ENCODE measurements at regions of chr13 and their contacts with region 1.

Region 1: DNA sequence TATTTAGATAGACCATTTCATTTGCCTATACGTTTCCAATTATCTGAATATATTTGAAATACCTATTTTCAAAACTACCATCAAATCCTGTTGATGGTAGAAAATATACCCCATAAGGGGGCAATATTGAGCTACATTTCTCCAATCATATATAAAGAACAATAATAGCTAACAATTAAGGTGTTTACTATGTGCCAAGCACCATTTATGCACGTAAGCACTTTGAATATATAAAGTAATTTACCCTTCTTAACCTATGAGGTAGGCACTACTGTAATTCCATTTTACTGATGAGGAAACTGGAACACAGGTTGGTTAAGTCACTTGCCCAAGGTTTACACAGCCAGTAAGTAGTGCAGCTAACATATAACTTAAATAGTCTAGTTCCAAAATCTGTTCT is 79.2 kb downstream of the UBL3 start:
- DNase-seq: no peak
- ATAC-seq: peak; percentile 39
- H3K4me3 Mint-ChIP-seq: no peak overlapping the region
- H3K27ac Mint-ChIP-seq: no peak overlapping the region
- H3K4me1 Mint-ChIP-seq: no peaks in the 10 kb centered on the region
- H3K27me3 Mint-ChIP-seq: no peaks in the 10 kb centered on the region
- CTCF ChIP-seq: peak; percentile 74

Region 2: DNA sequence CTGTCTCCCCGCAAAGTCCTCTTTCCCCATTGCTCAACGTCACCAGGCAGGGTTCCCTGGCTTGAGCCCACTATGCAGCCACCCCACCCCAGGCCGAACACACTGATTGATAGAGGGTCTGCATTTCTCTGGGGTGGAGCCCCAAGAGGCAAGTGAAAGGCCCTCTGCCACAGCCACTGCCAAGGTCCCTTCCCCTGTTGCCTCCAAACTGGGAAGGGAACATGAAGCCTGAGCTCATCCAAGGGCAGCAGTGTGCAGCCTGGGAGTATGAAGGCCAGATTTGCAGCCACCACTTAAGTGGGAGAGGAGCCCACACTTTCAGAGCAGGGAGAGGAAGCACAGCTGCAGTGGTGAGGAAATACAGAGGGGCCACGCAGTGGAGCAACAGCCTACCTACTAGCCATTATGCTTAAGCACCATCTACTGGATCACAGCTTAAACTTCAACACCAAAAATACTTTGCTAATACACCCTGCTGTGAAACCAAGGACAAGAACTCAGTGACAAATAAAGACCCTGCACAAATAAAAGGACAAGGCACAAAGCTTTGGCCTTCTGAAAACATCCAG is 30.6 kb after region 1 on chr13:
- CTCF ChIA-PET with region 1: interaction called, 12 read pairs
- POLR2A ChIA-PET with region 1: no interaction called
- intact Hi-C with region 1: no loop called
- DNase-seq: no peak
- ATAC-seq: no peak
- H3K4me3 Mint-ChIP-seq: no peak overlapping the region
- H3K27ac Mint-ChIP-seq: no peak overlapping the region
- H3K4me1 Mint-ChIP-seq: peaks cover 26% of the 10 kb centered on the region
- H3K27me3 Mint-ChIP-seq: no peaks in the 10 kb centered on the region
- CTCF ChIP-seq: no peak

Region 3: DNA sequence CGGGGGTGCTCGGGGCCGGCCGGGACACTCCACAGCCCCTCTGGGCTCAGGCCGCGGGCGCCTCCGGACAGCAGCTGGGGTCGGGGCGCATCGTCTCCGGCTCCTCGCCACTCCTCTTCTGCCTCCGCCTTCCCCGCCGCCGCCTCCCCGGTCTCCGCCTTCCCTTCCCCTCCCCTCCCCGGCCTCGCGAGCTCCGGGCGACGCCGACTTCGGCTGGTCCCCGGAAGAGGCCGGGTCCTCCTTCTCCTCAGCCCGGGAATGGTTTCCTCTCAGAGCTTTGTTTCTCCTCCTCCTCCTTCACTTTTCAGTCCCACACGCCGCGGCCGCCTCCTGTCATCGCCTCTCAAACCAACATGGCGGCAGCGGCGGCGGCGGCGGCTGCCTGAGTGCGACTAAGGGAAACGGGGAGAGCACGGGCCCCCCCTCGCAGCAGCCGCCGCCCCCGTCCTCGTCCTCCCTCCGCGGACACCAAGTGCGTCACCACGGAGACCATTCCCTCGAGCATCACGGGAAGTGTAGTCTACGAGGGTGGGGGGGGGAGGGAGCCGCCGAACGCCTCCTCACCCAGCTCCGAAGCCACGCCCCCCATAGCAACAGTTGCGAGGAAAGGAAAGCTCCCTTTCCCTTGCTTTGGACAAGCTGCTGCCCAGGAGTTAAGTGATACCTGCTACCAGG is 79.1 kb after region 1 on chr13 and contains the start of gene UBL3:
- CTCF ChIA-PET with region 1: interaction called, 14 read pairs
- POLR2A ChIA-PET with region 1: interaction called, 5 read pairs
- intact Hi-C with region 1: loop called (anchors 5 kb)
- DNase-seq: peak; percentile 96
- ATAC-seq: peak; percentile 91
- H3K4me3 Mint-ChIP-seq: peak within 1 kb of the TSS; percentile 92
- H3K27ac Mint-ChIP-seq: peak within 1 kb of the TSS; percentile 99
- H3K4me1 Mint-ChIP-seq: peaks cover 38% of the 10 kb centered on the region
- H3K27me3 Mint-ChIP-seq: no peaks in the 10 kb centered on the region
- CTCF ChIP-seq: no peak
- total RNA-seq, gene UBL3: 7.2 to 8.1 TPM

Region 4: GRCh38 chr13:29855784-29856183 is 84.5 kb after region 1 on chr13:
- CTCF ChIA-PET with region 1: interaction called, 14 read pairs
- POLR2A ChIA-PET with region 1: no interaction called
- intact Hi-C with region 1: no loop called
- DNase-seq: no peak
- ATAC-seq: no peak
- H3K4me3 Mint-ChIP-seq: no peak overlapping the region
- H3K27ac Mint-ChIP-seq: no peak overlapping the region
- H3K4me1 Mint-ChIP-seq: peaks cover 16% of the 10 kb centered on the region
- H3K27me3 Mint-ChIP-seq: no peaks in the 10 kb centered on the region
- CTCF ChIP-seq: no peak

Region 5: GRCh38 chr13:29935309-29935981 is 164.2 kb after region 1 on chr13:
- CTCF ChIA-PET with region 1: interaction called, 7 read pairs
- POLR2A ChIA-PET with region 1: no interaction called
- intact Hi-C with region 1: loop called (anchors 10 kb)
- DNase-seq: peak; percentile 93
- ATAC-seq: peak; percentile 95
- H3K4me3 Mint-ChIP-seq: peak overlapping the region; percentile 67
- H3K27ac Mint-ChIP-seq: peak overlapping the region; percentile 81
- H3K4me1 Mint-ChIP-seq: peaks cover 40% of the 10 kb centered on the region
- H3K27me3 Mint-ChIP-seq: no peaks in the 10 kb centered on the region
- CTCF ChIP-seq: no peak

Measured in activated CD8-positive, alpha-beta T cell treated with anti-CD3 and anti-CD28 coated beads for 36 hours (primary cell).